ENCODE measurements at regions of chr5 and their contacts with region 1.

Region 1: GRCh38 chr5:140351609-140352334 is 5.4 kb upstream of the HBEGF start:
- DNase-seq: no peak
- ATAC-seq: peak; percentile 86
- H3K4me3 ChIP-seq: no peak overlapping the region
- H3K27ac ChIP-seq: no peak overlapping the region
- H3K4me1 ChIP-seq: peaks cover 6% of the 10 kb centered on the region
- H3K27me3 ChIP-seq: no peaks in the 10 kb centered on the region; a peak in 1 of 4 replicates
- CTCF ChIP-seq: peak; percentile 70 to 89 (median 76)
- EP300 ChIP-seq: no peak
- POLR2A ChIP-seq: no peak
- RAD21 ChIP-seq: peak; percentile 89

Region 2: DNA sequence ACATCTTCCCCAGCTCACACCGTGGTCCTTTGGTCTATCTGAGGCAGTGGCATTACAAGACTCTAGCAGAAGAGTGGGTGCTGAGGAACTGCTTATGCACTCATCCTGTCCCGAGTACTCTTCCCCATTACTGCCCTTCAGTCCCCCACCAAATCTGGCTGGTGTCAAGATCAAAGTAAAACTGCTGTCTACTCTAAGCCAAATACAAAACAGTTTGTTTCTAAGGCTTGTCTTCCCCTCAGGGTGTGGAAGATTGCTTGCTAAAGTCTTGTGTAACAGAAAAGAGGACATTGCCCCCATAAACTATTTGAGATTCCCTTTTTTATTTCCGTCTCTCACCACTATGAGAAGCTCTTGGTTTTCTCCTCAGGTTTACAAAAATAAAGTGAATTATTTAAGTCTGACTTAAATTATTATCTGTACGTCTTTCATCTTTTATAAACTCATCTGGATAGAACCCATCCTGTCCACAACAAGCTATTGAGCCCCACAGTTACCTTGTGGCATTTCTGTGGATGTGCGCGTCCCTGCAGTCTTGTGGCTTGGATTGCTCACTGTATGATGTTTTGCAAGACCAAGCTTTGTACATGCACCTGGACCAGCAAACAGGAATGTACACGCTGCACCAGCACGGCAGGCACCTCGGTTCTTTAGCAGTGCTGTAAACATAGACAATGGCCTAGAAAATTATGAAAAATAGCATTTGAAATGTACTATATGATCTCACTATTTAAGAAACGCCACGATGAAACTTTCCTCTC is 115.8 kb before region 1 on chr5:
- CTCF ChIA-PET with region 1: interaction called, 774 read pairs
- POLR2A ChIA-PET with region 1: interaction called, 3 read pairs
- RAD21 ChIA-PET with region 1: interaction called, 41 read pairs
- SMC1A ChIA-PET with region 1: interaction called, 345 read pairs
- in situ Hi-C with region 1: no loop called
- intact Hi-C with region 1: loop called (anchors 1 kb)
- DNase-seq: no peak
- ATAC-seq: no peak
- H3K4me3 ChIP-seq: no peak overlapping the region
- H3K27ac ChIP-seq: no peak overlapping the region
- H3K4me1 ChIP-seq: no peaks in the 10 kb centered on the region
- H3K27me3 ChIP-seq: no peaks in the 10 kb centered on the region
- CTCF ChIP-seq: no peak
- EP300 ChIP-seq: no peak
- POLR2A ChIP-seq: no peak
- RAD21 ChIP-seq: no peak

Region 3: GRCh38 chr5:140266471-140267200 is 85.1 kb before region 1 on chr5:
- CTCF ChIA-PET with region 1: interaction called, 35 read pairs
- POLR2A ChIA-PET with region 1: no interaction called
- RAD21 ChIA-PET with region 1: interaction called, 9 read pairs
- SMC1A ChIA-PET with region 1: interaction called, 7 read pairs
- in situ Hi-C with region 1: no loop called
- intact Hi-C with region 1: no loop called
- DNase-seq: no peak
- ATAC-seq: peak; percentile 43
- H3K4me3 ChIP-seq: no peak overlapping the region
- H3K27ac ChIP-seq: no peak overlapping the region
- H3K4me1 ChIP-seq: peaks cover 15% of the 10 kb centered on the region
- H3K27me3 ChIP-seq: no peaks in the 10 kb centered on the region
- CTCF ChIP-seq: no peak
- EP300 ChIP-seq: no peak
- POLR2A ChIP-seq: no peak
- RAD21 ChIP-seq: no peak

Region 4: DNA sequence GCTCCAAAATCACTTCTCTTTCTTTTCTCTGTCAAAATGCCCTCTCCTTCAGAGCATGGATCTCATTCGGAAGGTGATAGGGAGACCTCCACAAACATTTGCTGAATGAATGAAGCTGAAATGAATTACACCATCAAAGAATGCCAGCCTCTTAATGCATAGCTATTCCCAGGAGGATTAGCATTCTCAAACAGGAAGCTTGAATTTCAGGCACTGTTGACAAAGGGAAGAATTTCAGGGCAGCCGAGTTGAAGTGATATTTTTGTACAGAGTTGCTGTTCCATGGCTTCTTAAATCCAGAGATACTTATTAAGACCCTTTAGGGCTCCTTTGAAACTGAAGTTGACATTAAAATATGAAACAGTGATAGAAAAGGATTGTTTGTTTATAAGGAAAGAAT is 24.2 kb before region 1 on chr5:
- CTCF ChIA-PET with region 1: interaction called, 11 read pairs
- POLR2A ChIA-PET with region 1: no interaction called
- RAD21 ChIA-PET with region 1: interaction called, 8 read pairs
- SMC1A ChIA-PET with region 1: interaction called, 22 read pairs
- in situ Hi-C with region 1: no loop called
- intact Hi-C with region 1: no loop called
- DNase-seq: no peak
- ATAC-seq: no peak
- H3K4me3 ChIP-seq: no peak overlapping the region
- H3K27ac ChIP-seq: no peak overlapping the region
- H3K4me1 ChIP-seq: no peaks in the 10 kb centered on the region
- H3K27me3 ChIP-seq: no peaks in the 10 kb centered on the region
- CTCF ChIP-seq: no peak
- EP300 ChIP-seq: no peak
- POLR2A ChIP-seq: no peak
- RAD21 ChIP-seq: no peak

Region 5: GRCh38 chr5:140362860-140363630 is 11.3 kb after region 1 on chr5:
- CTCF ChIA-PET with region 1: interaction called, 25 read pairs
- POLR2A ChIA-PET with region 1: no interaction called
- RAD21 ChIA-PET with region 1: interaction called, 6 read pairs
- SMC1A ChIA-PET with region 1: interaction called, 9 read pairs
- in situ Hi-C with region 1: no loop called
- intact Hi-C with region 1: no loop called
- DNase-seq: no peak
- ATAC-seq: peak; percentile 97
- H3K4me3 ChIP-seq: peak overlapping the region; percentile 57; the same call in 1 of the 2 replicates
- H3K27ac ChIP-seq: no peak overlapping the region
- H3K4me1 ChIP-seq: no peaks in the 10 kb centered on the region; the same call in 1 of the 2 replicates
- H3K27me3 ChIP-seq: no peaks in the 10 kb centered on the region
- CTCF ChIP-seq: peak; percentile 96 to 97 (median 96)
- EP300 ChIP-seq: no peak
- POLR2A ChIP-seq: no peak
- RAD21 ChIP-seq: peak; percentile 72